ENCODE measurements at regions of chr6 and their contacts with region 1.

Region 1: GRCh38 chr6:64527899-64528298 is 892.3 kb downstream of the PHF3 start:
- DNase-seq: no peak
- H3K4me3 ChIP-seq: no peak overlapping the region
- H3K27ac ChIP-seq: no peak overlapping the region
- H3K4me1 ChIP-seq: no peaks in the 10 kb centered on the region
- H3K27me3 ChIP-seq: no peaks in the 10 kb centered on the region
- CTCF ChIP-seq: no peak

Region 2: DNA sequence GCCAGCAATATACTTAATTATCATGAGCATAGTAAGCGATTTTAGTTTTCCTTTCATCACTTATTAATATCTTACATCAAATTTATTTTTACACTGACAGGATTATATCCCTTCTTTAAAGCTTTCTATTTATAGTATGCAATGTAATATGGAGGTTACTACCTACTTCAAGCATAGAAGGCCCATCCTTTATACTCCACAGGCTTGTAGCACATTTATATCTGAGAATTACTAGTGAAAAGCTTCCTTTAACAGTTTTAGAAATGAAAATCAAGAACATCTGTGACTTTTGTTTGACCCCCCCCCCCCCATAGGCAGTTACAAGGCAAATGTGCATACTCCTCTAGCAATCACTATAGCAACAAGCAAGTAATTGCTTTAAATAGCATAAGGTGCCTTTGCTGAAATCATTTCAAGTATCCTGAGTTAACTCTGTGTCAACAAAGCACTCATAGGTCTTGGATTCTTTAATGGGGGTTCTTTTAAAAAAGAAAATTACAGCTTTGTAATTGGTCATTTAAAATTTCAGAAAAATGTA is 25.4 kb after region 1 on chr6:
- CTCF ChIA-PET with region 1: interaction called, 10 read pairs
- POLR2A ChIA-PET with region 1: no interaction called
- intact Hi-C with region 1: no loop called
- DNase-seq: no peak
- H3K4me3 ChIP-seq: no peak overlapping the region
- H3K27ac ChIP-seq: no peak overlapping the region
- H3K4me1 ChIP-seq: no peaks in the 10 kb centered on the region
- H3K27me3 ChIP-seq: no peaks in the 10 kb centered on the region
- CTCF ChIP-seq: no peak

Measured in PC-9 (cell line).